GM13976 (cell line): ENCODE measurements at regions of chr9 and their contacts with region 1.

Region 1: DNA sequence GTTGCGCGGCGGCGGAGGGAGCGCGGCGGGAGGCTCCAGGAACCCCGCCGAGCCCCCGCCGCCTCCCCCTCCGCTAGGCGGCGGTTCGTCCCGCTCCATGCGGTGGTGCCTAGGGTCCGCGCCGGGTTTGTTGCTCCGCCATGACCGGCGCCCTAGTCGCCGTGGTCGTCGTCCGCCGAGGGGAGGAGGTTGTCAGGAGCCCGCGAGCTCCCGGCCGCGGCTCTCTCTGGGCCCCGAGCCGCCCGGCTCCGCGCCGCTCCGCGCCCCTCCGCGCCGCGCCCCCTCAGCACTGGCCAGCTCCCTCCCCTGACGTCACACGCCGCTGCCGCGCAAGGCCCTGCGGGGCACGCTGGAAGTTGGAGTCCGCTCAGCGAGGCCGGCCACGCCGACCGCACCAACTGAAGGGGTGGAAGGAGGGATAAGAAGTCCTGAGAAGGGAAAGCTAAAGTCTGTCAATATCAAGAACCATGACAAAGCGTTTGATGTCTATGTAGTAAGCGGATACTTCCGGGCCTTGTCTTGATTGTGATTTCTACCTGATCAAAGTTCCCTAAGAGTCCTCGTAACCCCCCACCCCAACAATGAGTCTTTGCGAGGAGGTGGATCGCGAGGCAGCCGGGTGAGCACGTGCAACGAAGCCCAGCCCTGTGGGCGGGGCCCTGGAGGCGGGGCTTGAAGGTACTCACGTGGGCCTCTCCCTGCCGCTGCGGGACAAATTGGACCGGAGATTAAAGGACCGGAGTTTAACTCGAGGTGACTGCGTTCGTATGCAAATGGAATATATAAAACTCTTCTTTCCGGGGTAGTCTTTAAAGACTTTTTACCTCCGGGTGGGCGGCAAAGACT is at the start of gene NR6A1:
- DNase-seq: peak; percentile 97
- CTCF ChIP-seq: peak; percentile 1

Region 2: DNA sequence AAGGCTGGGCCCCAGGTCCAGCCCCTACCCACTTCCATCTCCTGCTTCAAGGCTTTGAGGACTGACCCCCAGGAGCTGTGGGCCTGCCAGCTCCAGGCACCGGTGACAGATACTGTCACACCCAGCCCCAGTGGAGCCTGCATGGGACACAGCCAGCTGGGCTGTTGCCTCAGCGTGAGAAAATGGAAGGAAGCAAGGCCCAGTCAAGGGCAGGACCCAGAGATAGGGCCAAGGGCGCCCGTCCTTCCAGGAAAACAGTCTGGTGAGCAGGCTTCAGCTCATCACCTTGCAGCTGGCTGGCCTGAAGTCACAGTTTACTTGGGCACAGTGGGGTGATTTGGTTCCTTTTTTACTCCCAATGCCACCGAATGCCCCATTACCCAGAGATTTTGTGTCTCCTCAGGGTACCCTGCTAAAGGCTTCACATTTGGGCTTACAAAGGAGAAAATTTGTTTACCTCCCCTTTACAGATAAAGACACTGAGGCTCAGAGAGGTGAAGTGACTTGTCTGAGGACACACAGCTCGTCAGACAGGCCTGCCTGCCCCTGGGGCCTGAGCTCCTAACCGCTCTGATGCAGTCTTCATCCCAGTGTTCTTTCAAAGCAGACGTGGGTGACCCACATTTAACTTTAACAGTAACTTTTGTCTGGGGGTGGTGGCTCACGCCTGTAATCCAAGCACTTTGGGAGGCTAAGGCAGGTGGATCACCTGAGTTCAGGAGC is 60.6 kb after region 1 on chr9:
- in situ Hi-C with region 1: no loop called
- DNase-seq: no peak
- CTCF ChIP-seq: no peak

Region 3: GRCh38 chr9:124849801-124850200 is 78.6 kb after region 1 on chr9:
- in situ Hi-C with region 1: loop called (anchors 5 kb)
- DNase-seq: no peak
- CTCF ChIP-seq: no peak

Region 4: DNA sequence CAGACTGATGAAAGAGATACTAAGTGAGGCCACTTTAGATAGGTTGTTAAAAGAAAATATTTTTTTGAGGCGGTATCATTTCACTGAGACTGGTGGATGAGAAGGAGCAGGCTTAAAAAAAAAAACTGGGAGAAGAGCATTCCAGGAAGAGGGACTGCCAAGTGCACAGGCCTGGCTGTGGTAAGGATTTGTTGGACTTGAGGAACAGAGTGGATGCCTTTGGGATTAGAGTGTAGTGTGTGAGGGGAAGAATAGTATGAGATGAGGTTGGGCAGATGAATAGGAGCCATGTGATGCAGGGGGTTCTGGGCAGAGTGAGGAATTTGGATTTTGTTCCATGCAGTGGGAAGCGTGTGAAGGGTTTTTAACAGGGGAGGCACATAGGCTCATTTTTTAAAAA is 1033.8 kb after region 1 on chr9:
- in situ Hi-C with region 1: no loop called
- DNase-seq: no peak
- CTCF ChIP-seq: no peak